Left ventricle myocardium superior (tissue), 1 donor: ENCODE measurements at regions of chr2 and their contacts with region 1.

Region 1: GRCh38 chr2:29146197-29146596 is 31.0 kb downstream of the CLIP4 start:
- DNase-seq: no peak
- ATAC-seq: no peak

Region 2: DNA sequence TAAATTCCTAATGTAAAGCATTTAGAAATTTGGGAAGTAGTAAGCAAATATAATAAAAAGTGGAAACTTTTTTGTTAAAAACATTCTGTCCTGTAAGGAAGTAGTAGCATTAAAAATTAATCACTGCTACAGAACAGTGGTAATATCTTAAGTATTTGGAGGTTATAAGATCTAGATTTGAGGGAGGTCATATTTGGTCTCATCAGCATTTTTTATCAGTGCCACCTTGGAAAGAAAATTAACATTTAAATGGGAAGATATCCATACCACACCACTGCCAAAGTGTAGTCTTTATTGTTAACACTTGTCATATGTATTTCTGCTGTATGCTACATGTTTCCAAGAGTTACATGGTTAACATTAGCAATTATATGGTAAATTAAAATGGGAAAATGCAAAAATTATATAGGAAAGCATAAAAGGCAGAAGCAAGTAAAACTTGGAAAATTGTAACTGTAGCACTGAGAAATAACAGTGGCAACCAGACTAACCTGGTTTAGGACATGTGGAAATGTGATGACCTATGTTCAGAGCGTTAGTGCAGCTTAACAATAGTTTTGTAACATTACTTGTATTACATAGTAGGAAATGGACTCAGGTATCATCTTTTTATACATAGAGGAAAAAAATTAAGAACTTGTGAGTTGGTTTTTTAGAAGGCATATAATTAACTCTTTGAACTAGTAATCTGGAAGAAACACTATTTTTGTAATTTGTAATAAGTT is 16.2 kb after region 1 on chr2:
- intact Hi-C with region 1: loop called (anchors 2 kb)
- DNase-seq: no peak
- ATAC-seq: no peak